ENCODE measurements at regions of chr6 and their contacts with region 1.

Region 1: DNA sequence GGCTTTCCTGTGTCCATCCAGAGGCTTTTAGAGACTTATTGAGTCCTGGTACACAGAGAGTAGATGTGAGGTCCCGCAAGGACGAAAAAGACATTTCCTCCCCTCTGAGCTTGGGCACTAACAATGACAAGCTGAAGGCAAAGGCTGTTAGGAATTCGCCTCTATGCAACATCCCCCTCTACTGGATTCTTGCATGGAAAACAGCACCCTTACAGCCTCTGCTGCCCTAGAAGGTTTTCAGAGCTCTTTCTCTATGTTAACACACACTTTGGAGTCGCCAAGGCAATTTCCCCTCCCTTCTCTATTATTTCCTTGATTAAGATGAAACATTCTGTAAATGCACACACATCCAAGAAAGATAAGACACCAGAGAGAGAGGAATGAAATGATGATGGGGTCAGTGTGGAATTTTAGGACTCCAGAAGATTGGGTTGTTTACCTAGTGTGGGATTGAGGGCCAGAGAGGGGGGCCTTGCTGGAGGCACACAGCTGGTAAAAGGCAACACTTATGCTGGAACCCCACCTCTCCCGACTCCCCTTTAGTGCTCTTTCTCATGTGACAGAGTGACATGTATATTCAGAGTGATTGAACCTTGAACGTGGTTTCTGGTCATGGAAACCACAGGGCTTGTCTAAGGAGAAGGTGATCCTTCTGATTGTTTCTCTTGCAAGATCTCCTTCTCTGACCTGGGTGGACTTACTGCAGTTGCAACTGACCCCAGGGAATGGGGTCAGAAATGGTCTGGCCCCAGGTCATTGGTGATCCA is 300.7 kb downstream of the CLIC5 start:
- DNase-seq: peak; percentile 43 to 70
- H3K4me3 ChIP-seq: no peak overlapping the region
- H3K4me3 Mint-ChIP-seq: no peak overlapping the region
- H3K27ac Mint-ChIP-seq: no peak overlapping the region
- H3K4me1 ChIP-seq: no peaks in the 10 kb centered on the region
- H3K4me1 Mint-ChIP-seq: no peaks in the 10 kb centered on the region
- H3K27me3 ChIP-seq: no peaks in the 10 kb centered on the region
- H3K27me3 Mint-ChIP-seq: peaks cover 4% of the 10 kb centered on the region
- CTCF ChIP-seq: peak; percentile 71 to 84

Region 2: DNA sequence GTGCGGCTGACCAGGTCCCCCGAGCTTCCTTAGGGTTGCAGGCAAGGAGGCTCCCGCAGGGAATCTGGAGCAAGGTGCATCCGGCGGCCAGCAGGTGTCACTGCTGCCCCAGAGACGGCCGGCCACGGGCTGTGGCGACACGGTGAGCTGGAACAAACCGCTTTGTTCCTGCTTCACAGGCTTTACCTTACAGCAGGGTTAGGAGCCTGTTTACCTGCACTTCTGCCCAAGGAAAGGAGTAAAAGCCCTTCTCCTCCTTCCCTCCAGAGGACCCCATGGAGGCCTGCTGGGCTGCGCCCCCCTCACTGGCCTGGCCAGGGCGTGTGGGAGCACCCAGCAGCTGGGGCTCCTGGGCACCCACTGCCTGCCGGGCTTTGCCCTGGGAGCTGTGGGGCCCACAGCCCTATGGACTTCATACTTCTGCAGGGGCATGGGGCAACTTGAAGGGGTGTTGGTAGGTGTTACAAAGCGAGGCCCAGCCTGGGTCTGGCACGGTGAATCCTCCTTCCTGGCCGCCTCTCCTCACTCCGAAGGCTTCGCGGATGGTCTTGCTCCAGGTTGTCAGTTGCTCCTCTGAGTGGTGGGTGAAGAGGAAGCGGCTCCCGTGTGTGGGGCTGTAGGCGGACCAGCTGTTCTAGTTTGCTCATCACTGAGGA is 1239.0 kb before region 1 on chr6:
- CTCF ChIA-PET with region 1: interaction called, 23 read pairs
- POLR2A ChIA-PET with region 1: no interaction called
- intact Hi-C with region 1: loop called (anchors 5 kb)
- DNase-seq: peak; percentile 79 to 90
- H3K4me3 ChIP-seq: no peak overlapping the region
- H3K4me3 Mint-ChIP-seq: no peak overlapping the region
- H3K27ac Mint-ChIP-seq: no peak overlapping the region
- H3K4me1 ChIP-seq: peaks cover 13% of the 10 kb centered on the region
- H3K4me1 Mint-ChIP-seq: peaks cover 12% of the 10 kb centered on the region
- H3K27me3 ChIP-seq: no peaks in the 10 kb centered on the region
- H3K27me3 Mint-ChIP-seq: peaks cover 3% of the 10 kb centered on the region
- CTCF ChIP-seq: peak; percentile 83 to 94

Region 3: GRCh38 chr6:44655412-44656342 is 1059.2 kb before region 1 on chr6:
- CTCF ChIA-PET with region 1: interaction called, 20 read pairs
- POLR2A ChIA-PET with region 1: no interaction called
- intact Hi-C with region 1: loop called (anchors 1 kb)
- DNase-seq: peak; percentile 70 to 80
- H3K4me3 ChIP-seq: no peak overlapping the region
- H3K4me3 Mint-ChIP-seq: peak overlapping the region; percentile 30
- H3K27ac Mint-ChIP-seq: peak overlapping the region; percentile 8
- H3K4me1 ChIP-seq: 0 out of 2 replicates have a peak, but pooled peaks cover 4% of the 10 kb centered on the region
- H3K4me1 Mint-ChIP-seq: peaks cover 15% of the 10 kb centered on the region
- H3K27me3 ChIP-seq: no peaks in the 10 kb centered on the region
- H3K27me3 Mint-ChIP-seq: peaks cover 4% of the 10 kb centered on the region
- CTCF ChIP-seq: peak; percentile 86 to 92

Region 4: DNA sequence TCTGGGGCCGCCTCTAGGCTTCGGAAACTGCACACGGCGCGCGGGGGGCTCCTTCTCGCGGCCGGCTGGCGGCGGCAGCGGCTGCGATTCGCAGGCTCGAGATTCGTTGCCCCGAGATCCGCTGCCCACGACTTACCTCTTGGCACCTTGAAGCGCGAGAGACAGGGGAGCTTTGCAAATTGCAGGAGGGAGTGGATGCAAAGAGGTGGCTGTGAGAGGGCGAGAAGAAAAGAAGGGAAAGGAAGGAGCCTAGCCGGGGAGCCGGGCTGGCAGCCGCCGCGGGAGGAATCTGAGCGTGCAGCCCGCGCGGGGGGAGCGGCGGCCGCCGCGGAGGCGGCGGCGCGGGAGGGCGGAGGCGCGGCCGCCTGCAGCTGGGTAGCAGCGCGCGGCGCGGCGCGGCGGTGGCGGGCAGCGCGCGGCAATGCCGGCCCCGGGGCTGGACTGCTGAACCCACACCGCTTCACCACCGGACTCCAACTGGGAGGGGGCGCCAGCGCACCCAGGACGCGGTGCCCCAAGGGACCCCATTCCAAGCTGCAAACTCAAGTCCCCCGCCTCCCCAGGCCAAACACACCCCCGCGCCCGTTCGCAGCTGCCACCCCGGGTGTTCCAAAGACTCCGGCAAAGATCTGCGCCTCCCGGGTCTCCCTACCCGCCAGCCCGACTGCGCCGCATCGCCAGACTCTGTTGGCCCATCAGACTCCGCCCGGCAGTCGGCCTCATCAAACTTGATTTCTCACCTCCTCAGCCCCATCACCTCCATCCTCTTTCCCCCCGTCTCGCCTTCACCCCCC is 293.0 kb before region 1 on chr6:
- CTCF ChIA-PET with region 1: interaction called, 10 read pairs
- POLR2A ChIA-PET with region 1: no interaction called
- intact Hi-C with region 1: loop called (anchors 2 kb)
- DNase-seq: peak; percentile 35 to 40
- H3K4me3 ChIP-seq: peak overlapping the region; percentile 46
- H3K4me3 Mint-ChIP-seq: peak overlapping the region; percentile 84
- H3K27ac Mint-ChIP-seq: no peak overlapping the region
- H3K4me1 ChIP-seq: peaks cover 7% of the 10 kb centered on the region; the same call in 1 of the 2 replicates
- H3K4me1 Mint-ChIP-seq: no peaks in the 10 kb centered on the region
- H3K27me3 ChIP-seq: peaks cover 13% of the 10 kb centered on the region
- H3K27me3 Mint-ChIP-seq: peaks cover 33% of the 10 kb centered on the region
- CTCF ChIP-seq: no peak

Region 5: DNA sequence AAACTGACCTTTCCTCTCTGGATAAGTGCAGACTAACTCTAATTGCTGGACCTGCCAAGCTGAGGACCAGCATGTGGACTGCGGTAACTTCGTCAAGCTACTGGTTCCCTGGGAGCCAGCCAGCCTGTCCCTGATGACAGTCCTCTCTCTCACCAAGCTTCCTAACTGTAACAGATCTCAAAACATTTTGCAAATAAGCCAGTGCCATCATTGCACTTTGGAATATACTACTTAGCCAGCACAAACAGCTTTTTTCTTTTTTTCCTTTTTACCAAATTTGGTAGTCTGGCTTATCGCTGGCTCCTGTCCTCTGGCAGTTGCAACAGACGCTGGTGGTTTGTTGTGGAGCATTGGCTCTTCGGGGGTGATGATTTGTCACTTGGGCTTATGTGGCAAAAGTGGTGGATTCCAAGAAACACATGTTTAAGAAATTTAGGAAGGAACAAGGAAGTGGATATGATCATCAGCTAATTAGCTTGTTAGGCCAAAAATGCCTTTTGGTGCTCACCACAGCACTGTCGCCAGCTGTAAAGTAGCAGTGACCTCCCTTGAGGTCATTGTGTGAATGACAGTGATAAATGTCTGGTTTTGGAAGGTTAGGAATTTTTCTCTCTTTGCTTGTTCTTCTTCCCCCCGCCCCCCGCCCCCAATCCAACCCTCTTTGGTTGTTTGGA is 129.1 kb after region 1 on chr6:
- CTCF ChIA-PET with region 1: no interaction called
- POLR2A ChIA-PET with region 1: no interaction called
- intact Hi-C with region 1: no loop called
- DNase-seq: no peak
- H3K4me3 ChIP-seq: no peak overlapping the region
- H3K4me3 Mint-ChIP-seq: no peak overlapping the region
- H3K27ac Mint-ChIP-seq: peak overlapping the region; percentile 11
- H3K4me1 ChIP-seq: peaks cover 21% of the 10 kb centered on the region
- H3K4me1 Mint-ChIP-seq: peaks cover 9% of the 10 kb centered on the region
- H3K27me3 ChIP-seq: no peaks in the 10 kb centered on the region
- H3K27me3 Mint-ChIP-seq: no peaks in the 10 kb centered on the region
- CTCF ChIP-seq: no peak

Region 6: GRCh38 chr6:45922728-45923351 is 207.9 kb after region 1 on chr6:
- CTCF ChIA-PET with region 1: interaction called, 22 read pairs
- POLR2A ChIA-PET with region 1: no interaction called
- intact Hi-C with region 1: loop called (anchors 1 kb)
- DNase-seq: peak; percentile 43 to 64
- H3K4me3 ChIP-seq: no peak overlapping the region
- H3K4me3 Mint-ChIP-seq: no peak overlapping the region
- H3K27ac Mint-ChIP-seq: no peak overlapping the region
- H3K4me1 ChIP-seq: peaks cover 4% of the 10 kb centered on the region; the same call in 1 of the 2 replicates
- H3K4me1 Mint-ChIP-seq: peaks cover 6% of the 10 kb centered on the region
- H3K27me3 ChIP-seq: no peaks in the 10 kb centered on the region
- H3K27me3 Mint-ChIP-seq: no peaks in the 10 kb centered on the region
- CTCF ChIP-seq: peak; percentile 35 to 58